ENCODE measurements at regions of chr4 and their contacts with region 1.

Region 1: GRCh38 chr4:112099701-112100297 is 45.5 kb upstream of the FAM241A start:
- DNase-seq: peak; percentile 42
- H3K4me3 ChIP-seq: no peak overlapping the region
- H3K27ac ChIP-seq: no peak overlapping the region
- H3K27me3 ChIP-seq: peaks cover 5% of the 10 kb centered on the region
- CTCF ChIP-seq: peak; percentile 66

Region 2: DNA sequence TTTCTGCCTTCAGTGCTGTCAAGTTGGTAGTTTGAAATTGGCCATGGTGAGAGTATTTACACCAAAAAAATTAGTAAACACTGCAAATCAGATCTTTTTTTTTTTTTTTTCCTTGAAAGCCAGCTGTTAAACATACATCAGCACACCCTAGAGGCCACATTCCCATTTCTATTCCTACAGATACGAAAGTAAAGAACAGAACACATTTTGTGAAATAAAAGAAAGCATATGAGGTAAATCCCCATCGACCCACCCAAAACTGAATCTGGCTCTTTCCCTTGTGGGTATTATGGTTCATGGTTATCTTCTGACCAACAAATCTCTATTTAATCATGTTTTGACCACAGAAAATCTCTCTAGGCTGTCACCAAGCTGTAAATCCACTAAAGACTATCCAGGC is 90.0 kb after region 1 on chr4:
- CTCF ChIA-PET with region 1: interaction called, 10 read pairs
- POLR2A ChIA-PET with region 1: no interaction called
- DNase-seq: no peak
- H3K4me3 ChIP-seq: no peak overlapping the region
- H3K27ac ChIP-seq: peak overlapping the region; percentile 21
- H3K27me3 ChIP-seq: no peaks in the 10 kb centered on the region
- CTCF ChIP-seq: peak; percentile 32

Region 3: GRCh38 chr4:112245383-112245782 is 145.6 kb after region 1 on chr4:
- CTCF ChIA-PET with region 1: interaction called, 40 read pairs
- POLR2A ChIA-PET with region 1: no interaction called
- DNase-seq: no peak
- H3K4me3 ChIP-seq: no peak overlapping the region
- H3K27ac ChIP-seq: no peak overlapping the region
- H3K27me3 ChIP-seq: no peaks in the 10 kb centered on the region
- CTCF ChIP-seq: peak; percentile 38

Region 4: GRCh38 chr4:112266821-112267220 is 167.0 kb after region 1 on chr4:
- CTCF ChIA-PET with region 1: interaction called, 37 read pairs
- POLR2A ChIA-PET with region 1: no interaction called
- DNase-seq: no peak
- H3K4me3 ChIP-seq: no peak overlapping the region
- H3K27ac ChIP-seq: no peak overlapping the region
- H3K27me3 ChIP-seq: no peaks in the 10 kb centered on the region
- CTCF ChIP-seq: peak; percentile 60

Region 5: GRCh38 chr4:112321776-112322684 is 222.2 kb after region 1 on chr4:
- CTCF ChIA-PET with region 1: interaction called, 17 read pairs
- POLR2A ChIA-PET with region 1: no interaction called
- DNase-seq: no peak
- H3K4me3 ChIP-seq: no peak overlapping the region
- H3K27ac ChIP-seq: no peak overlapping the region
- H3K27me3 ChIP-seq: no peaks in the 10 kb centered on the region
- CTCF ChIP-seq: peak; percentile 89